CD4-positive, alpha-beta memory T cell (primary cell): ENCODE measurements at regions of chr14 and their contacts with region 1.

Region 1: DNA sequence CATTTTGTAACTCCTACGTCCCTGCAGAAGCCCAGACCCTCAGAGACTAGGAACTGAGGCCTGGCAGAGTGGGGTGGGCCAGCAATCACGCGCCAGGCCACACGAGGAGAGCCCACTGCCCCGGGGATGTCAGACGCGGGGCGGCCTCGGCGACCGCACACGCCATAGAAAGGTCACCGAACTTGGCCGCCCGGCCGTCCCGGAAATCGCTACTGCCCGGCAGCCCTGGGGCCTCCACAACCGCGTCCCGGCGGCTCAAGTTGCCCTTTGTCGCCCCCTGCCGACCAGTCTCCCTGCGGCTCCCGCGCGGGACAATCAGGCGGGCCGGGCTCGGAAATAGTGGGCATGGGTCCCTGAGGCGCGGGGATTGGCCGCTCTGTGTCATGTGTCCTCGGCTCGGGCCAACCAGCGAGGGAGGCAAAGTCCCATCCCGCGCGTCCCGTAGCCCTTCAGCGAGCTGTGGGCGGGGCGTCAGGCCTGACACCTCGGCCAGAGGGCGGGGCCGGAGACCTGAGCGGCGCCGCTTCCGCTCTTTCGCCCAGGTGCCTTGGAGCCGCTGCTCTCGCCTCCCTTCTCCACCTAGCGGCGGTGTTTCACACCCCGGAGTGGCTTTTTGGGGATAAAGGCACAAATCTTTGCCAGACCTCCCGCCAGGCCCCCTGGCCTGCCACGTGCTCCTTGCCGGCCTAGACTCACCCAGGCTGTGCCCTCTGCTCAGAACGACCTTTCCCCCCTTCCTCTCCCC is 33.4 kb upstream of the DEGS2 start:
- DNase-seq: peak; percentile 99 to 100 (median 100)
- H3K4me3 ChIP-seq: peak overlapping the region in 1 of 2 donors; percentile 46
- H3K4me3 Mint-ChIP-seq: peak overlapping the region; percentile 54 to 70 (median 66)
- H3K27ac ChIP-seq: peak overlapping the region; percentile 65
- H3K27ac Mint-ChIP-seq: peak overlapping the region; percentile 81 to 96 (median 91)
- H3K4me1 ChIP-seq: peaks cover 13% of the 10 kb centered on the region
- H3K4me1 Mint-ChIP-seq: peaks cover 7 to 19% (median 9%) of the 10 kb centered on the region in 4 donors
- H3K27me3 ChIP-seq: no peaks in the 10 kb centered on the region
- H3K27me3 Mint-ChIP-seq: no peaks in the 10 kb centered on the region

Region 2: GRCh38 chr14:99683619-99684355 is 509.1 kb before region 1 on chr14 and contains the start of gene CYP46A1:
- CTCF ChIA-PET with region 1: no interaction called
- POLR2A ChIA-PET with region 1: no interaction called
- intact Hi-C with region 1: loop called (anchors 5 kb)
- DNase-seq: peak; percentile 98 to 100 (median 99)
- H3K4me3 ChIP-seq: peak within 1 kb of the TSS; percentile 86 to 92
- H3K4me3 Mint-ChIP-seq: peak within 1 kb of the TSS; percentile 86 to 97 (median 94)
- H3K27ac ChIP-seq: peak within 1 kb of the TSS; percentile 71
- H3K27ac Mint-ChIP-seq: peak within 1 kb of the TSS; percentile 92 to 96 (median 93)
- H3K4me1 ChIP-seq: peaks cover 19% of the 10 kb centered on the region
- H3K4me1 Mint-ChIP-seq: peaks cover 4 to 19% (median 12%) of the 10 kb centered on the region in 4 donors
- H3K27me3 ChIP-seq: no peaks in the 10 kb centered on the region
- H3K27me3 Mint-ChIP-seq: peaks cover 3 to 6% of the 10 kb centered on the region in 2 donors
- total RNA-seq, gene CYP46A1: 0.15 to 0.36 TPM

Region 3: DNA sequence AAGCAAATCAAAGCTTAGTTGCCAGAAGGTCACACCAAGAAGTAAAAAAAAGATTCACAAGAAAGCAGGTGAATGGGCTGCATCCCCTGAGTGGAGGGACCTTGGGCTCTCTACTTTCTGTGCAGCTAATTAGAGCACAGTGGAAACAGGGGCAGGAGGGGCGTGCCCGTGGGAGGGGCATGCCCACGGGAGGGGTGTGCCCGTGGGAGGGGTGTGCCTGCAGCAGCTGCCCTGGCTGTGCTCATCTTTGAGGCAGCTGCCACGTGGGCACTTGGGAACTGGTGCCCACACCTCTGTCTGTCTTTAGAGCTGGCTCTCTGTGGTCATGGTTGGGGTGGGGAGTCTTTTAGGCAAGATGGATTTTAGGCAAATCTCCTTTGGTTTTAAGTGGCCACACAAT is 339.6 kb before region 1 on chr14:
- CTCF ChIA-PET with region 1: no interaction called
- POLR2A ChIA-PET with region 1: no interaction called
- intact Hi-C with region 1: no loop called
- DNase-seq: no peak
- H3K4me3 ChIP-seq: no peak overlapping the region
- H3K4me3 Mint-ChIP-seq: no peak overlapping the region
- H3K27ac ChIP-seq: no peak overlapping the region
- H3K27ac Mint-ChIP-seq: no peak overlapping the region
- H3K4me1 ChIP-seq: no peaks in the 10 kb centered on the region
- H3K4me1 Mint-ChIP-seq: no peaks in the 10 kb centered on the region
- H3K27me3 ChIP-seq: no peaks in the 10 kb centered on the region
- H3K27me3 Mint-ChIP-seq: peaks cover 25 to 26% of the 10 kb centered on the region in 2 donors

Region 4: GRCh38 chr14:99891900-99892299 is 300.9 kb before region 1 on chr14:
- CTCF ChIA-PET with region 1: no interaction called
- POLR2A ChIA-PET with region 1: no interaction called
- intact Hi-C with region 1: no loop called
- DNase-seq: no peak
- H3K4me3 ChIP-seq: no peak overlapping the region
- H3K4me3 Mint-ChIP-seq: no peak overlapping the region
- H3K27ac ChIP-seq: no peak overlapping the region
- H3K27ac Mint-ChIP-seq: no peak overlapping the region
- H3K4me1 ChIP-seq: no peaks in the 10 kb centered on the region
- H3K4me1 Mint-ChIP-seq: no peaks in the 10 kb centered on the region
- H3K27me3 ChIP-seq: no peaks in the 10 kb centered on the region
- H3K27me3 Mint-ChIP-seq: peaks cover 6 to 7% of the 10 kb centered on the region in 2 donors

Region 5: GRCh38 chr14:100056964-100057795 is 135.7 kb before region 1 on chr14:
- CTCF ChIA-PET with region 1: interaction called, 50 read pairs
- POLR2A ChIA-PET with region 1: interaction called, 6 read pairs
- intact Hi-C with region 1: loop called (anchors 1 kb)
- DNase-seq: peak; percentile 61 to 71 (median 66)
- H3K4me3 ChIP-seq: no peak overlapping the region
- H3K4me3 Mint-ChIP-seq: peak overlapping the region; percentile 20 to 80 (median 40)
- H3K27ac ChIP-seq: peak overlapping the region; percentile 3
- H3K27ac Mint-ChIP-seq: peak overlapping the region; percentile 80 to 95 (median 92)
- H3K4me1 ChIP-seq: peaks cover 56% of the 10 kb centered on the region
- H3K4me1 Mint-ChIP-seq: peaks cover 37 to 58% (median 46%) of the 10 kb centered on the region in 4 donors
- H3K27me3 ChIP-seq: no peaks in the 10 kb centered on the region
- H3K27me3 Mint-ChIP-seq: no peaks in the 10 kb centered on the region

Region 6: GRCh38 chr14:100078991-100079725 is 113.7 kb before region 1 on chr14:
- CTCF ChIA-PET with region 1: interaction called, 12 read pairs
- POLR2A ChIA-PET with region 1: interaction called, 9 read pairs
- intact Hi-C with region 1: no loop called
- DNase-seq: peak; percentile 87 to 96 (median 88)
- H3K4me3 ChIP-seq: peak overlapping the region; percentile 41 to 52
- H3K4me3 Mint-ChIP-seq: peak overlapping the region; percentile 83 to 88 (median 86)
- H3K27ac ChIP-seq: peak overlapping the region; percentile 62
- H3K27ac Mint-ChIP-seq: peak overlapping the region; percentile 91 to 99 (median 95)
- H3K4me1 ChIP-seq: peaks cover 100% of the 10 kb centered on the region
- H3K4me1 Mint-ChIP-seq: peaks cover 81 to 100% (median 92%) of the 10 kb centered on the region in 4 donors
- H3K27me3 ChIP-seq: no peaks in the 10 kb centered on the region
- H3K27me3 Mint-ChIP-seq: no peaks in the 10 kb centered on the region

Region 7: GRCh38 chr14:100203949-100204834 is 11.3 kb after region 1 on chr14:
- CTCF ChIA-PET with region 1: interaction called, 25 read pairs
- POLR2A ChIA-PET with region 1: interaction called, 3 read pairs
- intact Hi-C with region 1: no loop called
- DNase-seq: no peak
- H3K4me3 ChIP-seq: no peak overlapping the region
- H3K4me3 Mint-ChIP-seq: no peak overlapping the region
- H3K27ac ChIP-seq: no peak overlapping the region
- H3K27ac Mint-ChIP-seq: no peak overlapping the region
- H3K4me1 ChIP-seq: no peaks in the 10 kb centered on the region
- H3K4me1 Mint-ChIP-seq: peaks cover 0 to 1% (median 0%) of the 10 kb centered on the region in 4 donors
- H3K27me3 ChIP-seq: no peaks in the 10 kb centered on the region
- H3K27me3 Mint-ChIP-seq: peaks cover 0 to 4% of the 10 kb centered on the region in 2 donors

Region 8: GRCh38 chr14:100239840-100240724 is 47.2 kb after region 1 on chr14:
- CTCF ChIA-PET with region 1: interaction called, 43 read pairs
- POLR2A ChIA-PET with region 1: interaction called, 17 read pairs
- intact Hi-C with region 1: loop called (anchors 1 kb)
- DNase-seq: peak; percentile 86 to 91 (median 88)
- H3K4me3 ChIP-seq: peak overlapping the region; percentile 42 to 92
- H3K4me3 Mint-ChIP-seq: peak overlapping the region; percentile 86 to 96 (median 92)
- H3K27ac ChIP-seq: peak overlapping the region; percentile 84
- H3K27ac Mint-ChIP-seq: peak overlapping the region; percentile 95 to 98 (median 96)
- H3K4me1 ChIP-seq: peaks cover 67% of the 10 kb centered on the region
- H3K4me1 Mint-ChIP-seq: peaks cover 37 to 65% (median 48%) of the 10 kb centered on the region in 4 donors
- H3K27me3 ChIP-seq: no peaks in the 10 kb centered on the region
- H3K27me3 Mint-ChIP-seq: no peaks in the 10 kb centered on the region

Region 9: DNA sequence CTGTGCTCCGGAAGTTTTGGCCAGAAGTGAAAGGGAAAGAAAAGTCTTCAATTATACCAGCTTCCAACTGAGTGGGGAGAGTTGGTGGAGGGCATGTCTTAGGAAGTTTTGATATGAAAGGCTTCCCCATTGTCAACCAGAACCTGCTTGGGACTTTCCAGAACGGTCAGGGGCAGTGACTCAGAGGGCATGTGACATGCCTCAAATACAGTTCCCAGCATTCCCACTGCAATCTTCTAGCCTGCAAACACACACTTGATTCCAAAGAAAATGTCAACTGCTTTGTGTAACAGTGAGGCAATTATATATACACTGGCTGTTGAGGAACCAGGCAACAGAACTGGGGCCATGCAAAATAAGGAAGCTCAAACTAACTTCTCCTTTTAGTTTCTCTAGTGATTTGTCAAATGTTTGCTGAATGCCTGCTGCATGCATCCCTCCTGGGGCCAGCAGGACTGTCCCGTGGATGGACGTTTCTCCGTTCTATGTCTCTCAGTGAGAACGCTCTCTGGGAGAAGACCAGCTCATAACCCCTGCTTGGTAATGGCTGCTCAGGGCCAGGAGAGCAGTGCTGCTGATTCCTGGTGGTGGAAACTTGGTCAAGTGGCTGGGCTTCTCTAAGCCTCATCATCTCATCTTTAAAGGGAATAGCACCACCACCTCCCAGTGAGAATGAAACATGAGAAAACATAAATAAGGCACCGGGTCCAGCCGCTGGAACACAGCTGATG is 148.6 kb after region 1 on chr14:
- CTCF ChIA-PET with region 1: no interaction called
- POLR2A ChIA-PET with region 1: no interaction called
- intact Hi-C with region 1: no loop called
- DNase-seq: no peak
- H3K4me3 ChIP-seq: no peak overlapping the region
- H3K4me3 Mint-ChIP-seq: no peak overlapping the region
- H3K27ac ChIP-seq: no peak overlapping the region
- H3K27ac Mint-ChIP-seq: peak overlapping the region in 4 of 7 donors; percentile 9 to 62 (median 30)
- H3K4me1 ChIP-seq: no peaks in the 10 kb centered on the region
- H3K4me1 Mint-ChIP-seq: peaks cover 0 to 2% (median under 1%) of the 10 kb centered on the region in 4 donors
- H3K27me3 ChIP-seq: no peaks in the 10 kb centered on the region
- H3K27me3 Mint-ChIP-seq: no peaks in the 10 kb centered on the region